K562 (cell line): ENCODE measurements at regions of chr11 and their contacts with region 1.

Region 1: GRCh38 chr11:94757037-94757735 is 11.0 kb upstream of the AMOTL1 start:
- DNase-seq: no peak
- ATAC-seq: no peak
- H3K4me3 ChIP-seq: no peak overlapping the region
- H3K27ac ChIP-seq: no peak overlapping the region
- H3K4me1 ChIP-seq: peaks cover 0 to 25% of the 10 kb centered on the region in 2 experiments; a peak in 4 of 5 replicates
- H3K27me3 ChIP-seq: no peaks in the 10 kb centered on the region
- CTCF ChIP-seq: no peak
- EP300 ChIP-seq: no peak
- POLR2A ChIP-seq: no peak
- RAD21 ChIP-seq: peak; percentile 8 to 27; a peak in 1 of 4 replicates

Region 2: DNA sequence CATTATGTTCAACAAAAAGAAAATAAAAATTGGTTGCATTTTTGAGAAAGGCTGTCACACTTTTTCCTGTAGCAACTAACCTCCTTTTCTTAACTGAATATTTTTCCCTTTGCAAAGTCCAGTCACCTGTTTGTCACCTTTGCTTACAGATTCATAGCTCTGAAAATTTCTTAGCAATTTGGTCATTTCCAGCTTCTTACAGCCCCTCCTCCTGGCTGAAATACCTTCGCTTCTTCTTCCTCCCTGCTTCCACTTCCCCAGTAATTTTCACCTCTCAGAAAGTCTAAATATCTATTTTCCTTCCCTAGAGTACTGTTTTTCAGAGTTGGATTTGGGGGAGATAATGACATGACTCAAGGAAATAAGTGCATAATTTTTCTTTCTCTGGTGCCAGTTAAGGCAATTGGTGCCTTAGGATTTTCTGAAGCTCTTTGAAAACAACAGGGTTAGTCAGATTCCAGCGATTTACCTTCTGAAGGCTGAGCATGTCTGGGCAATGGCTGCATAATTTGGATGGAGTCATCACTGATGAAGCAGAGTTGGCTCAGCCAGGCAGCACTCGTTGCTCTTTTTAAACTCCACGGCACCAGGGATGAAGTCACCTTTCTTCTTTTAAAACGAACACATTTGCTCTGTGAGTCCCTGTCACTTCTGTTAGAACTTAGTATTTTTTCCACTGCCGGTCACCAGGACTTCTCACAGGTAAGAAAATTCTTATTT is 51.1 kb before region 1 on chr11:
- CTCF ChIA-PET with region 1: no interaction called
- POLR2A ChIA-PET with region 1: no interaction called
- in situ Hi-C with region 1: no loop called
- intact Hi-C with region 1: no loop called
- DNase-seq: no peak
- ATAC-seq: no peak
- H3K4me3 ChIP-seq: no peak overlapping the region
- H3K27ac ChIP-seq: no peak overlapping the region
- H3K4me1 ChIP-seq: no peaks in the 10 kb centered on the region
- H3K27me3 ChIP-seq: no peaks in the 10 kb centered on the region
- CTCF ChIP-seq: no peak
- EP300 ChIP-seq: no peak
- POLR2A ChIP-seq: no peak
- RAD21 ChIP-seq: 0 out of 4 replicates have a peak, but pooled peaks of 1 of the 2 experiments have one; percentile 1

Region 3: GRCh38 chr11:94767761-94768601 is 10.8 kb after region 1 on chr11 and contains the start of gene AMOTL1:
- CTCF ChIA-PET with region 1: no interaction called
- POLR2A ChIA-PET with region 1: interaction called, 15 read pairs
- in situ Hi-C with region 1: no loop called
- intact Hi-C with region 1: no loop called
- DNase-seq: peak; percentile 73 to 89 (median 74)
- ATAC-seq: peak; percentile 91
- H3K4me3 ChIP-seq: peak within 1 kb of the TSS; percentile 59
- H3K27ac ChIP-seq: peak within 1 kb of the TSS; percentile 87
- H3K4me1 ChIP-seq: peaks cover 20 to 25% of the 10 kb centered on the region in 2 experiments
- H3K27me3 ChIP-seq: no peaks in the 10 kb centered on the region; a peak in 1 of 5 replicates
- CTCF ChIP-seq: peak in 2 of 3 experiments; percentile 23 to 32; a peak in 3 of 6 replicates
- EP300 ChIP-seq: no peak
- POLR2A ChIP-seq: peak; percentile 70
- RAD21 ChIP-seq: peak; percentile 50 to 51
- polyA plus RNA-seq, gene AMOTL1: 4.0 to 4.7 TPM